ENCODE measurements at regions of chr7 and their contacts with region 1.

Region 1: GRCh38 chr7:121003986-121004685 is 15.6 kb downstream of the CPED1 start:
- DNase-seq: no peak
- H3K4me3 ChIP-seq: no peak overlapping the region
- H3K27ac ChIP-seq: peak overlapping the region; percentile 83 to 88
- H3K4me1 ChIP-seq: peaks cover 2 to 49% of the 10 kb centered on the region in 2 donors
- H3K27me3 ChIP-seq: no peaks in the 10 kb centered on the region
- CTCF ChIP-seq: no peak

Region 2: DNA sequence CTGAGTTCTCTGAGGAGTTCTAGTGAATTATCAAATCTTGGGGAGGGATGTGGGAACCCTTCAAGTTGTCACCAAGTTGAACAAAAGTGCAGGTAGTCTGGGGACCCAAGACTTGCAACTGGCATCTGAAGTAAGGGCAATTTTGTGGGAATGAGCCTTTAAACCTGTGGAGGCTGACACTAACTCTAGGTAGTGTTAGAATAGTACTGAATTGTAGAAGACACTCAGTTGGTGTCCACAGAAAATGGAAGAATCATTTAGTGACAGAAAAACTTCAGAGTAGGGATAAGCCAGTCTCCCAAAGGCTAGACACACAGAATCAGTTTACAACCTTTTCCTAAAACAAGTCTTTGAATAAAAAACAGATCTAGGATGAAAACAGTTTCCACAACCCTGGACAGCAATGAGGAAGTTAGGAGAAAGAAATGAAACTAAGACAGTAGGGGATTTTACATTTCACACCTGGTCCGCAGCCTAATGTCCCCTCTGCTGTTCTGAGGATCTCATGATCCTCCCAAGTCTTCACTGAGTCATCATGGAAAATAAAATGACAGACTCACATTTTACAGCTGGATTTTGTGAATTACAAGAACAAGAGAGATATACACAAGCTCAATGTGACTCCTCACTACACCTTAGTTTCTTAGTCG is 76.6 kb before region 1 on chr7:
- intact Hi-C with region 1: no loop called
- DNase-seq: no peak
- H3K4me3 ChIP-seq: no peak overlapping the region
- H3K27ac ChIP-seq: no peak overlapping the region
- H3K4me1 ChIP-seq: no peaks in the 10 kb centered on the region
- H3K27me3 ChIP-seq: no peaks in the 10 kb centered on the region
- CTCF ChIP-seq: no peak

Region 3: GRCh38 chr7:121019018-121019417 is 14.9 kb after region 1 on chr7:
- intact Hi-C with region 1: loop called (anchors 2 kb)
- DNase-seq: no peak
- H3K4me3 ChIP-seq: no peak overlapping the region
- H3K27ac ChIP-seq: peak overlapping the region; percentile 69 to 77
- H3K4me1 ChIP-seq: peaks cover 6 to 62% of the 10 kb centered on the region in 2 donors
- H3K27me3 ChIP-seq: no peaks in the 10 kb centered on the region
- CTCF ChIP-seq: no peak

Region 4: DNA sequence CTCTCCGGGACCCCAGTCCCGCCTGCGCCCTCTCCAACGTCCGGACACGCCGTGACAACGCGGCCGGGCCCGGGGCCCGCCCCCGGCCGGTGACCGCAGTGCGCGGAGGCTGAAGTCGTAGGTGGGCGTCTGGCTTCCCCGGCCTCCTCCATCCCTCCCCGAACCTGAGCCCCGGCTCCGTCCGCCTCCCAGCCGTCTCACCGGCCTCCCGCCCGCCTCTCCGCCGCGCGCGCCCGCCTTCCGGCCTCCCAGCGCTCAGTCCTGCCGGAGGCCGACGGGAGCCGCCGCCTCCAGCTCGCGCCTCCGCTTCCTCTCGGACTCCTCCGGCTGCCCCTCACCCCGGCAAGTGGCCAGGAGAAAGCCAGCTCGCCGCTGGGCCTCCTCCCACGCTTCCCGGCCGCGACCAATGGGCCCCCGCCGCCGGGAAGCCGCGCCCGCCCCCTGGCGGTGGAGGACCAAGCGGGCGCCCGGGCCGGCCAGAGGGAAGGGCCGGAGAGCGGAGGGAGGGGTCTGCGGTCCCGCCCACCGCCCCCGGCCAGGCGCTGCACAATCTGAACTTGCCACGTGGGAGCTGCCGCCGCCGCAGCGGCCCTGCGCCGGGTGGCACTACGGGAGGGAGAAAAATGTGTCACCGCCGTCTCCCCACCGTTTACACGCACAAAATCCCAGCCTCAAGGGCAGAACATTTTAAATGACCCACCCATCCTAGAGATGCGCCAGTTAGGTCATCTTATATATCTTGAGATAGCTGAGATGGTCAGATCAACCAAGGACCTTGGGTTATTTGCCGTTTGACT is 392.0 kb after region 1 on chr7 and contains the start of gene FAM3C:
- intact Hi-C with region 1: no loop called
- DNase-seq: peak; percentile 75 to 95
- H3K4me3 ChIP-seq: peak within 1 kb of the TSS; percentile 93 to 100
- H3K27ac ChIP-seq: peak within 1 kb of the TSS; percentile 85 to 91
- H3K4me1 ChIP-seq: no peaks in the 10 kb centered on the region
- H3K27me3 ChIP-seq: no peaks in the 10 kb centered on the region
- CTCF ChIP-seq: peak; percentile 83 to 96 (median 92)
- total RNA-seq, gene FAM3C: 27.6 TPM